ENCODE measurements at regions of chr22 and their contacts with region 1.

Region 1: GRCh38 chr22:17077255-17077654 is 7.5 kb upstream of the IL17RA start:
- DNase-seq: no peak
- H3K4me3 Mint-ChIP-seq: no peak overlapping the region
- H3K27ac Mint-ChIP-seq: no peak overlapping the region
- H3K4me1 Mint-ChIP-seq: peaks cover 19% of the 10 kb centered on the region
- H3K27me3 Mint-ChIP-seq: peaks cover 51% of the 10 kb centered on the region

Region 2: DNA sequence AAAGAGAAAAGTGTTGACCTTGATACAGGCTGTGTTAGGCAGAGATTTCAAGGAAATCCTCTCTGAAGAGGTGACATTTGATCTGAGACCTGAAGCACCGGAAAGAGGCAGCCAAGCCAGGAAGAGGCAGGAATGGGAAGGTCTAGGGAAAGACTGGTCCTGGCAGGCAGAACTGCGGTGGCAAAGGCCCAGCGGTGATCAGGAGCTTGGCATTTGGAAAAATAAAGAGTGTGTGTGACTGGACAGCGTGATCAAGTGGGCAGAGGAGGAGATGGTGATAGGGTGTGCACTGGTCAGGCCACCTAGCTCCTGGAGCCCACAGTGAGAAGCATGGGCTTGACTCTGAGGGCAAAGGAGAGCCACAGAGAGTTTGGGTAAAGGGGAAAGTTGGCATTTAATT is 42.0 kb before region 1 on chr22:
- CTCF ChIA-PET with region 1: no interaction called
- DNase-seq: no peak
- H3K4me3 Mint-ChIP-seq: no peak overlapping the region
- H3K27ac Mint-ChIP-seq: no peak overlapping the region
- H3K4me1 Mint-ChIP-seq: peaks cover 11% of the 10 kb centered on the region
- H3K27me3 Mint-ChIP-seq: peaks cover 42% of the 10 kb centered on the region

Region 3: GRCh38 chr22:17057959-17058814 is 19.1 kb before region 1 on chr22:
- CTCF ChIA-PET with region 1: no interaction called
- DNase-seq: peak; percentile 67
- H3K4me3 Mint-ChIP-seq: no peak overlapping the region
- H3K27ac Mint-ChIP-seq: no peak overlapping the region
- H3K4me1 Mint-ChIP-seq: peaks cover 2% of the 10 kb centered on the region
- H3K27me3 Mint-ChIP-seq: peaks cover 13% of the 10 kb centered on the region

Region 4: DNA sequence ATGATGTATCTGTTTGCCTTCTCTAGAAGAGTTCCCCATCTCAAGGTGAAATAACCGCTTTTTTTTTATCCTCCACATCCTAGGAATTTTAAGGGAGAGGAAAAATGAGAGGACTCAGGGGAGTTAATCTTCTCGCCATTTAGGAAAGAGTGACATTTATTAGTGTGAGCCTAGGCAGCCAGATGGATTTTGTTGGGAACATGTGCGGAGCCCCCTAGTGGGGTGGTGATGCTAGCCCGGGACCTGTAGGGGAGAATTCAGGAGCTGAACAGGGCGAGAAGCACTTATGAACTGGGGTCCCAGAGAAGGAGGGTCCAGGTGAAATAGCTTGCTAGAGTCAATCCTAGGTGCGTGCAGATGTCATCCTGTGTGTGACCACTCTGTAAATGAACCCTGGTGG is 18.3 kb after region 1 on chr22:
- CTCF ChIA-PET with region 1: no interaction called
- DNase-seq: no peak
- H3K4me3 Mint-ChIP-seq: no peak overlapping the region
- H3K27ac Mint-ChIP-seq: no peak overlapping the region
- H3K4me1 Mint-ChIP-seq: peaks cover 97% of the 10 kb centered on the region
- H3K27me3 Mint-ChIP-seq: no peaks in the 10 kb centered on the region

Region 5: DNA sequence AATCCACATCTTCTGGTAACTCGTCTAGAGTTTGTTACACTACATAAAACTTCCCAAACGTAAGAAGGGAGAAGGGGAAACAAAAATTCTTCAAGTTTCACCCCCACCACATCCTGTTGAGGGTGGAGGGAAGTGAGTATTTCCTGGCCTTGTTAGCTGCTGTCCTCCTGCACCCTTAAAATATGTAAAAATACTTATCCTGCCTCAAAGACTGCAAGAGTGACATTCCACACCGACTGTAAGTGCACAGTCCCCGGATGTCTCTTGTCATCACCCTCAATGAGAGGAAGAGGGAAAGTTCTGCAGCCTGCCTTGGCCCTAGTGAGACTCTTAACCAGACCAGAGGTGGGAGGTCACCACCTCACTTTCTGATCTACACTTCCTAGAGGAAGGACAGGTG is 40.6 kb after region 1 on chr22:
- CTCF ChIA-PET with region 1: interaction called, 15 read pairs
- DNase-seq: peak; percentile 47
- H3K4me3 Mint-ChIP-seq: peak overlapping the region; percentile 59
- H3K27ac Mint-ChIP-seq: peak overlapping the region; percentile 86
- H3K4me1 Mint-ChIP-seq: peaks cover 58% of the 10 kb centered on the region
- H3K27me3 Mint-ChIP-seq: peaks cover 46% of the 10 kb centered on the region

Region 6: GRCh38 chr22:17501679-17502285 is 424.5 kb after region 1 on chr22:
- CTCF ChIA-PET with region 1: interaction called, 37 read pairs
- DNase-seq: peak; percentile 33
- H3K4me3 Mint-ChIP-seq: no peak overlapping the region
- H3K27ac Mint-ChIP-seq: no peak overlapping the region
- H3K4me1 Mint-ChIP-seq: no peaks in the 10 kb centered on the region
- H3K27me3 Mint-ChIP-seq: peaks cover 9% of the 10 kb centered on the region